ENCODE measurements at regions of chr17 and their contacts with region 1.

Region 1: GRCh38 chr17:63834431-63835166 is 7.1 kb upstream of the FTSJ3 start:
- DNase-seq: peak; percentile 53 to 77 (median 58)
- ATAC-seq: no peak
- H3K4me3 ChIP-seq: no peak overlapping the region
- H3K27ac ChIP-seq: peak overlapping the region in 1 of 4 donors; percentile 40
- H3K4me1 ChIP-seq: peaks cover 43% of the 10 kb centered on the region
- H3K27me3 ChIP-seq: no peaks in the 10 kb centered on the region
- CTCF ChIP-seq: peak in 6 of 7 experiments; percentile 18 to 55 (median 38)
- POLR2A ChIP-seq: no peak

Region 2: GRCh38 chr17:63773381-63774140 is 61.0 kb before region 1 on chr17 and contains the start of gene CCDC47:
- intact Hi-C with region 1: loop called (anchors 10 kb)
- DNase-seq: peak; percentile 98 to 99 (median 99)
- ATAC-seq: peak; percentile 91
- H3K4me3 ChIP-seq: peak within 1 kb of the TSS; percentile 62 to 89
- H3K27ac ChIP-seq: peak within 1 kb of the TSS; percentile 92 to 99 (median 96)
- H3K4me1 ChIP-seq: peaks cover 58% of the 10 kb centered on the region
- H3K27me3 ChIP-seq: no peaks in the 10 kb centered on the region
- CTCF ChIP-seq: no peak
- POLR2A ChIP-seq: peak; percentile 95 to 96 (median 95)
- total RNA-seq, gene CCDC47: 42.2 to 56.8 TPM

Measured in body of pancreas (tissue), 4 donors.